AG04450 (cell line): ENCODE measurements at regions of chr9 and their contacts with region 1.

Region 1: GRCh38 chr9:38160613-38161215 is 91.7 kb upstream of the SHB start:
- DNase-seq: no peak
- H3K4me3 ChIP-seq: no peak overlapping the region
- H3K27ac ChIP-seq: no peak overlapping the region
- H3K27me3 ChIP-seq: peaks cover 8% of the 10 kb centered on the region
- CTCF ChIP-seq: peak; percentile 91

Region 2: GRCh38 chr9:37913480-37914153 is 247.1 kb before region 1 on chr9:
- CTCF ChIA-PET with region 1: interaction called, 65 read pairs
- POLR2A ChIA-PET with region 1: no interaction called
- DNase-seq: no peak
- H3K4me3 ChIP-seq: no peak overlapping the region
- H3K27ac ChIP-seq: no peak overlapping the region
- H3K27me3 ChIP-seq: no peaks in the 10 kb centered on the region
- CTCF ChIP-seq: peak; percentile 99

Region 3: GRCh38 chr9:38088006-38088925 is 72.4 kb before region 1 on chr9:
- CTCF ChIA-PET with region 1: interaction called, 33 read pairs
- POLR2A ChIA-PET with region 1: no interaction called
- DNase-seq: no peak
- H3K4me3 ChIP-seq: no peak overlapping the region
- H3K27ac ChIP-seq: no peak overlapping the region
- H3K27me3 ChIP-seq: no peaks in the 10 kb centered on the region
- CTCF ChIP-seq: peak; percentile 96

Region 4: DNA sequence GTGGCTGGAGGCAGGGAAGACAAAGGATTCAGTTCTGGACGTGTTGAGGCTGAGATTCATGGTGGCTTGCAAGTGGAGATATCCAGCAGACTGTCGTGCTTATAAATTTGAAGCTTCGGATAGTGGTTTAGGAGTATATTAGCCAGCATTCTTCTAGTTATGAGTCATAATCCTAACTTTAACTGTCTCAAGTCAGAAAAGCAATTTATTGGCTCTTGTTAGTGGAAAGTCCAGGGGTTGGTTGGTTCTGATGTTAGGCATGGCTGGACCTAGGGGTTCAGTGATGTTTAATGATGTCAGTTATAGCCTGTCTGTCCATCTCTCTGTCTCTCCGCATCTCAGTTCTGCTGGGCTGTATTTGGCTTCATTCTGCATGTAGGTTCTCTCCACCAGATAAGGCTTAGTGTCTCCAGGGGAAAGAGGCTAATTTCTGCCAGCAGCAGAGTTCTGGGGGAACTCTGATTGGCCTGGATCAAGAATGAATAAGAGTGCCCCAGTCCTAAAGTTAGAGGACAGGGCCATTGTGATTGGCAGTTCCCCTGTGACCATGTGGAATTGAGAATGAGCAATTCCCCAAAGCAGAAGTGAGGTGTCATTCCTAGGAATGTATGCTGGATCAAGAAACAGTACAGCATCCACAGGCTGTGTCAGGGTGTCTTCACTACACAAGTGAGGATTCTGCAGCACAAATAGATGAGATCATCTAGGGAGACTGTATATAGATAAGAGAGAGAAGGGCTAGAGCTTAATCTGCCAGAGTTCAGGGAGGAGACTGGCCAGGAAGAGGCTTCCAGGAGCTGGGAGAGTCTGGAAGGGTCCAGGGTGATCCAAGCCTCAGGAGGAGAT is 18.7 kb before region 1 on chr9:
- CTCF ChIA-PET with region 1: interaction called, 20 read pairs
- POLR2A ChIA-PET with region 1: no interaction called
- DNase-seq: peak; percentile 33
- H3K4me3 ChIP-seq: peak overlapping the region; percentile 38
- H3K27ac ChIP-seq: peak overlapping the region; percentile 83
- H3K27me3 ChIP-seq: peaks cover 10% of the 10 kb centered on the region
- CTCF ChIP-seq: no peak

Region 5: GRCh38 chr9:38172585-38172984 is 11.9 kb after region 1 on chr9:
- CTCF ChIA-PET with region 1: interaction called, 11 read pairs
- POLR2A ChIA-PET with region 1: no interaction called
- DNase-seq: no peak
- H3K4me3 ChIP-seq: no peak overlapping the region
- H3K27ac ChIP-seq: no peak overlapping the region
- H3K27me3 ChIP-seq: peaks cover 2% of the 10 kb centered on the region
- CTCF ChIP-seq: no peak

Region 6: DNA sequence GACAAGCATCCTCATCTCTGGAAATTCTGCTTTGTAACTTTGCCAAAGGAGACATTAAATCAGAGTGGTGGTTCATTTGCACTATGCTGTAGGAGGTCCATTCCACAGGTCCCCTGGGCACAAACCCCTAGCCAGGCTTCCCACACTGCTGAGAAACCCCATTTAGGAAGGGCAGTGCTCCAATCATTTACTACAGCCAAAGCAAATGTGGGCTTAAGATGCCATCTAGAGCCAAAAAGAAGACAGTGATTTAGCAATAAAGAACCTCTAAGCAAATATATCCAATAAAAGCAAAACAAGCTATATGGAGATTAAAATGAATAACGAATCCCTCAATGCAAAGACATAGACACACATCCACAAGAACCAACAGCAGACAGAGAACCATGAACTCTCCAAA is 102.8 kb after region 1 on chr9:
- CTCF ChIA-PET with region 1: interaction called, 11 read pairs
- POLR2A ChIA-PET with region 1: no interaction called
- DNase-seq: no peak
- H3K4me3 ChIP-seq: no peak overlapping the region
- H3K27ac ChIP-seq: no peak overlapping the region
- H3K27me3 ChIP-seq: peaks cover 16% of the 10 kb centered on the region
- CTCF ChIP-seq: peak; percentile 56

Region 7: DNA sequence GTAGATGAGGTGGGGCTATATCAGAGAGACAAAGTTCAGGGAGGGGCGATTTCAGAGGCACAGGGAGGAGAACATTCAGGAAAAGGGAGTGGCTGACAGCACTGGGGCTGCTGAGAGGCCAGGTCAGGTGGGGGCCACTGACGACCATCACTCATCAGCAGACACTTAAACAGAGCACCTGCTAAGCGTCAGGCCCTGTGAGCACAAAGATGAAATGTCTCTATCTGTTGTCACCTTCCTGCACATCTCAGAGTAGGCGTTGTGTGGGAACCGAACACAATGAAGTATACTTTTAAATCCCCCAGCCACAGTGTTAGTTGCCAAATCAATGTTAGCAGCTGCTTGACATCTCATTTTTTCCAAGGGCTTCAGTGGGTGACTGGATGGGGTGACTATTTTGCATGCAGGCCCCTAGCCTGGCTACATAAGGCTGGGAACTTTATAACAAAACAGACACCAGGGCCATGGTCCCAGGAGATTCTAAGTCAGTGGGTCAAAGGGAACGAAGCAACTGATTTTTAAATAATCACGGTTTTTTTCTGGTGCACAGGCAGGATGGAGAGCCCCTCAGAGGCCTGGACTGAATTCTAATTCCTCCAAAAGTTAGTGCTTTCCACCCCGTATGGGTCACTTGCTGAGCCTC is 490.8 kb after region 1 on chr9:
- CTCF ChIA-PET with region 1: no interaction called
- POLR2A ChIA-PET with region 1: no interaction called
- DNase-seq: no peak
- H3K4me3 ChIP-seq: no peak overlapping the region
- H3K27ac ChIP-seq: no peak overlapping the region
- H3K27me3 ChIP-seq: peaks cover 9% of the 10 kb centered on the region
- CTCF ChIP-seq: no peak